Tibial artery (tissue), 4 donors: ENCODE measurements at regions of chr2 and their contacts with region 1.

Region 1: DNA sequence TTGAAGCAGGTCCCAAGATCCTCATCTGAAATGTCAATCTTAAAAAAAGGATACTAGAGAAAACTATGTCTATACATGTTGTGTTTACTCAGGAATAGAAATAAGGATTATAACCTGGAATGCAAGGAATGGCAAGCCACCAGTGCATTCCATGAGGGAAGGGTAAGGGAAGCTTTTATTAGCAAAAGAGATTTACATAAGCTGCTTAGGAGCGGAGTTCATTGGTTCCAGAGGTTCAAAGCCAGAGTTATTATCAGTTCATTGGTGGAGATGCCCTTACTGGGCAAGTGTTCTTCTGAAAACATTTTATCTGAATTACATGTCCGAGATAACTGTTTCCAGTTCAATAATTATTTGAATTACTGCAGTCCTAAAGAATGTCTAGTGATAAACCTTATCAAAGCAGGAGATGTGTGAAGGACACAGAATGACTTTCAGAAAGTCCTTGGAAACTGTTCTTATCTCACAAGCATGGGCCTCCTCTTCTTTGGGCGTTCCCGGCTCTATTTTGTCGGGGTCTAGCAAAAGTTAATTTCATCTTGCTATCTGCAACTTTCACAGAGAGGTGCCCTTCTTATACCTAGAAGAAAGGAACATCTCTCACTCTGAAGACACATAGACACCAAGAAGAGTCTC is 23.5 kb downstream of the COMMD1 start:
- DNase-seq: no peak
- H3K4me3 ChIP-seq: no peak overlapping the region
- H3K27ac ChIP-seq: no peak overlapping the region
- H3K4me1 ChIP-seq: peaks cover 0 to 24% (median 3%) of the 10 kb centered on the region in 4 donors
- H3K27me3 ChIP-seq: no peaks in the 10 kb centered on the region
- CTCF ChIP-seq: no peak

Region 2: DNA sequence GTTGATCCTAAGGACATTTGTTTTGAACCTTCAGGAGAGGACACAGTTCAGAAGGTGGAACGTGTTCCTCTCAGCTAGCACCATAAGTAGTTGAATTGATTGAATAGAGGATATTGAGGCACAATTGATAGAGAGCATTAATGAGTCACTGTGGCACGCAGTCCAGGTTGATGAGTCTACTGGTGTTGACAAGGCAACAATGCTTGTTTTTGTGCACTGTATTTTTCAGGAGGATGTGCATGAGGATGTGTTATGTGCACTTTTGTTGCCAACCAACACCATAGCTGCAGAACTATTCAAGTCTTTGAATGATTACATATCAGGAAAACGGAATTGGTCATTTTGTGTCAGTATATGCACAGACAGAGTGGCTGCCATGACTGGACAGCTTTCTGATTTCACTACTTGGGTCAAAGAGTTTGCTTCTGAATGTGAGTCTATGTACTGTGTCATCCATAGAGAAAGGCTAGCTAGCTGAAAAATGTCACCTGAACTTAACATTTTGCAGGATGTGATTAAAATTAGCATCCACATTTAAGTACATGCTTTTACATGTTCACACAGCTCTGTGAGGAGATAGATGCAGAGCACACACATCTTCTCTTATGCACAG is 126.9 kb after region 1 on chr2:
- intact Hi-C with region 1: no loop called
- DNase-seq: no peak
- H3K4me3 ChIP-seq: no peak overlapping the region
- H3K27ac ChIP-seq: no peak overlapping the region
- H3K4me1 ChIP-seq: peaks cover 0 to 1% (median 0%) of the 10 kb centered on the region in 4 donors
- H3K27me3 ChIP-seq: no peaks in the 10 kb centered on the region
- CTCF ChIP-seq: no peak

Region 3: DNA sequence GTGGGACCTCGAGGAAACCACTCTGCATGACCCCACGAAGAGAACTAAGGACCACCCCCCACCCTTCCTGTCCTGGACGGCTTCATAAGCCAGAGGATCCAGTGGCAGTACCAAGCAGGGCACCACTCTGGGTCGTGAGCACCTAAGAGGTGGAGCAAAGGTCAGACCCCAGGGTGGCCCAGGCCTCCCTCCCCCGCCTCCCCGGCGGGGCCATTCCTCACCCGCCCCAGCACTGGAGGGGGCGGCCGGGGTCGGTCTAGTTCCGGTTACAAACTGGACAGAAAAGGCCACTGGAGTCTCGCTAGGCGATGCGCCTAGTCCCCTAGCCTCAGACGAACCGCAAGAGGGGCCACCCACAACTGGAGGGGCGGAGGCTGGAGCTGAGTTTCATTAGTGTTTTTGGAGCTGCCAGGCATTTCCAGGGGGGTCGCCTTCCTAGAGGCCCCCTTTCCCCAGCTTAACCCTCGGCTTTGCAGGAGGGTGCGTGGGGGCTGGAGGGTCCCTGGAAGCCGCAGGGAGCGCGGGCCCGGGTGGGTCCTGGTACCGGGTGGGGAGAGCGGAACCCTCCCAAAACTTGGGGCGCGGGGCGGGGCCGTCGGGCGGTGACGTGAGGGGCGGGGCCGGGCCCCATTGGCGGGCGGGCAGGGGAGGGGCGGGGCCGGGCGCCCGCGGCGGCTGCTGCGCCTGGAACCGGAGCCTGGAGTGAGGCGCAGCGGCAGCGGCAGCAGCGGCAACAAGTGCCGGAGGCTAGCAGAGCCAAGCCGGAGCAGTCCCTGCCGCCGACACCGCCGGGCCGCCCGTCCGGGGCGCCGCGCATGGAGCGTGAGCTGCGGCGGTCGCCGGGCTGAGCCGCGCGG is 266.7 kb after region 1 on chr2 and contains the start of gene B3GNT2:
- intact Hi-C with region 1: loop called (anchors 10 kb)
- DNase-seq: peak; percentile 66 to 88
- H3K4me3 ChIP-seq: peak within 1 kb of the TSS; percentile 88 to 94
- H3K27ac ChIP-seq: peak within 1 kb of the TSS; percentile 92 to 93
- H3K4me1 ChIP-seq: peaks cover 0 to 40% (median 17%) of the 10 kb centered on the region in 4 donors
- H3K27me3 ChIP-seq: no peaks in the 10 kb centered on the region
- CTCF ChIP-seq: no peak